A549 (cell line): ENCODE measurements at regions of chr12 and their contacts with region 1.

Region 1: DNA sequence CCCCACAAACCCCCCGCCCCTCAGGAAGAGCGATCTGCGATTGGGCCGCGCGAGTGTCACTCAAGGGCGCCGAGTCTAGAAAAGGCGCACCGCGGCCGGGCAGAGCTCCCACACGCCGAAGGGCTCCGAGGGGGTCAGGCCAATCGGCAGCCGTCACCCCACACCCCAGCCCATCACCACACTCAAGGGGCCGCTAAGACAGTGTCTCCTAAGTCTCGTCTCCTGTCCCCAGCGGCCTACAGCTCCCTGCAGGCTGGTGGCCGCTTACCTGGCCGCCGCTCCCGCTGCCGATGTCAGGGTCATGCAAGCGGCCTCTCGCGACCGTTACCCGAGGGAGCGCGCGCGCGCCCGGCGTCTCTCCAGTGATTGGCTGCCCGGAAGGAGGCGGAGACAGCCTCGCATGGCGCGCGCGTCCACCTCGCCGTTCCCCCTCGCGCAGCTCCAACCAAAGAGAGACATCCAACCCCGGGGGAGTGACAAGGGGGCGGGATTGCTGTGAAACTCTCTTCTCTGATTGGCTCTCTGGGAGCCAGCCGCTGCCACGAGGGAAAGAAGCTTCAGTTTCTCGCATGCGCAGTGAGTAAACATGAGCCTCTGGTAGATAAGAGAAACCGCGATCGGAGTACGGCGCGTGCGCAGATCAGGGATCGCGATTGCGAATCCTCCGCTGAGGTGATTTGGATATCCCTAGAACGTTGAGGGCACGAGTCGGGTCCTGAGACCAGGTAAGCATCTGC is at the starts of genes MPHOSPH9 and MTRFR:
- DNase-seq: peak; percentile 99 to 100
- ATAC-seq: peak; percentile 96 to 97
- H3K4me3 ChIP-seq: peak within 1 kb of the TSS; percentile 84
- H3K27ac ChIP-seq: peak within 1 kb of the TSS; percentile 93 to 97
- H3K4me1 ChIP-seq: peaks cover 38% of the 10 kb centered on the region
- CTCF ChIP-seq: no peak
- EP300 ChIP-seq: no peak
- POLR2A ChIP-seq: peak; percentile 99
- RAD21 ChIP-seq: 0 out of 5 replicates have a peak, but pooled peaks of 1 of the 2 experiments have one; percentile 20
- polyA plus RNA-seq, gene MPHOSPH9: 52.0 and 74.9 TPM in 2 replicates
- polyA plus RNA-seq, gene MTRFR: 15.5 and 16.0 TPM in 2 replicates

Region 2: DNA sequence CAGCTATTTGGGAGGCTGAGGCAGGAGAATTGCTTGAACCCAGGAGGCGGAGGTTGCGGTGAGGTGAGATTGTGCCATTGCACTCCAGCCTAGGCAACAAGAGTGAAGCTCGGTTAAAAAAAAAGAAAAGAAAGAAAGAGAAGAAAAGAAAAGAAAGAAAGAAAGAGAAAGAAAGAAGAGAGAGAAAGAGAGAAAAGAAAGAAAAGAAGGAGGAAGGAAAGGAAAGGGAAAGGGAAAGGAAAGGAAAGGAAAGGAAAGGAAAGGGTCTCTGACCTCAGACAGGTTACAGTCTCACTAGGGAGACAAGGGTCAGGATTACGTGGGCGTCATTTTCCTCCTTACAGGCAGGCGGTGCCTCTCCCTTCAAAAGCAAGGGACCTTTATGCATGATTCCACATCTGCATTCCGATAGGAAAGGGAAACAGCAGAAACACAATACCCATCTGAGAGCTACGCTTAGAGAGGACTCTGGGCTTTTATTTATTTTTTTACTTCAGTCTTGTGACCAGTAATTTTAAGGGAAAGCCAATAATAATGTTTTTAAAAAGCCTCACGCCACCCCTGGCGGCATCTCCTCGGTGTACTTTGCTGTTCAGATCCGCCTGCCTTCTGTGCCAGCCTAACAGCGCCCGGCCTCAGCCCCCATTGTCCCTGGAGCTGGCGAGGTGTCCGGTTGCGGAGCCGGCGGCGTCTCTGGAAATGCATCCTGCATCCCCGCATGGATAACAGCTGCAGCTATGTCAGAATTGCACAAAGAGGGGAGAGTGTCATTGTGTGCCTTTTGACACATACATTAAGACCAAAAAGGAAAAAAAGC is 398.7 kb before region 1 on chr12:
- CTCF ChIA-PET with region 1: no interaction called
- POLR2A ChIA-PET with region 1: no interaction called
- DNase-seq: peak; percentile 79 to 82
- ATAC-seq: peak; percentile 74 to 84
- H3K4me3 ChIP-seq: peak overlapping the region; percentile 98
- H3K27ac ChIP-seq: peak overlapping the region; percentile 82 to 87
- H3K4me1 ChIP-seq: peaks cover 26% of the 10 kb centered on the region
- CTCF ChIP-seq: peak; percentile 23; the same call in 1 of the 3 replicates
- EP300 ChIP-seq: no peak
- POLR2A ChIP-seq: no peak
- RAD21 ChIP-seq: no peak

Region 3: DNA sequence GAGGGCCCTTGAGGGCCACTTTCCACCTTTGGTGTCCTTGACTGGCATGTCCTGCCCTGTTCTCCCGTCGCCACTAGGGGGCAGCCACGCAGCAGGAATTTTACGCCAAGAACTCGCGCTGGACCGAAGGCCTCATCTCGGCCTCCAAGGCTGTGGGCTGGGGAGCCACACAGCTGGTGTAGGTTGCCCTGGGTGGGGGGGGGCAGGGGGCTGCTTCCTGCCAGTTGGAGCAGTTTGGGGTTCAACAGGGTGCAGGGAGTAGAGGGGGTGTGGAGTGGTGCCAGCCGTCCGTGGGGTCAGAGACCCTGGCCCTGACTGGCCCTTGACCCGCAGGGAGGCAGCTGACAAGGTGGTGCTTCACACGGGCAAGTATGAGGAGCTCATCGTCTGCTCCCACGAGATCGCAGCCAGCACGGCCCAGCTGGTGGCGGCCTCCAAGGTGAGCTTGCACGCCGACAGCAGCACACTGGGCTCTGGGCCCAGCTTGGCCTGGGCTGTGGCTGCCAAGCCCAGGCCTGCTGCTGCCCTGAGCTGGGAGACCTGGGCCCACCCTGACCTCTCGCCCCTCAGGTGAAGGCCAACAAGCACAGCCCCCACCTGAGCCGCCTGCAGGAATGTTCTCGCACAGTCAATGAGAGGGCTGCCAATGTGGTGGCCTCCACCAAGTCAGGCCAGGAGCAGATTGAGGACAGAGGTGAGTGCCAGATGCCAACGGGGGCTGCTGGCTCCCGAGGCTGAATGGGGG is 372.5 kb before region 1 on chr12:
- CTCF ChIA-PET with region 1: interaction called, 13 read pairs
- POLR2A ChIA-PET with region 1: interaction called, 4 read pairs
- DNase-seq: peak; percentile 72 to 83
- ATAC-seq: peak; percentile 63 to 87
- H3K4me3 ChIP-seq: no peak overlapping the region
- H3K27ac ChIP-seq: 0 out of 6 replicates have a peak overlapping the region, but pooled peaks of 1 of the 2 experiments have one; percentile 20
- H3K4me1 ChIP-seq: no peaks in the 10 kb centered on the region
- CTCF ChIP-seq: peak; percentile 93
- EP300 ChIP-seq: no peak
- POLR2A ChIP-seq: no peak
- RAD21 ChIP-seq: peak; percentile 96 to 98

Region 4: DNA sequence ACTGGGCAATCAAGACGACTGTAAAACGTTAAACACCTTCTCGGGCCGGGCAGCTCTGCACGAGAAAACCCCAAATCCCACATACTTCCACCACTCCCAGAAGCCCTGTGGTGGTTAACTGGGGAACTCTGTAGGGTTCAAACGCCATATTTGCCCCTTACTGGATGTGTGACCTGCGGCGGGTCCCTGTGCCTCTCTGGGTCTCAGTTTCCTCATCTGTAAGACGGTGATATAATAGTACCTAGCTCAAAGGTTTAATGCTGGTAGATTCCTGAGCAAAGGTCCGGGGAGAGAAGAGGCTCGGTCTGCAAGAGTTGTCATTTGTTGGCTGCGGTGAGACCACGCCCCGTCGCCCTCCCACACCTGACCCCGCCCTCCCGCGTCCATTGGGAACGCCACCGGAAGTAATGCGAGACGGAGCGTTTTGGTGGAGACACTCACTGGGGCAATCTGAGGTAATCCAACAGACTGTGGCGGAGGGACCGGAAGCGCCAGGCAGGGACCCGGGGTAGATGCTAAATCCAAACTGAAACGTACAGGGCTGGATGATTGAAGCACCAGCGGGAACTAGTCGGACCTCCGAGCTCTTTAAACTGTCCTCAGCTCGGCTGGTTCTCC is 258.6 kb before region 1 on chr12:
- CTCF ChIA-PET with region 1: interaction called, 13 read pairs
- POLR2A ChIA-PET with region 1: interaction called, 20 read pairs
- DNase-seq: peak; percentile 91 to 99
- ATAC-seq: peak; percentile 91 to 92
- H3K4me3 ChIP-seq: peak overlapping the region; percentile 79
- H3K27ac ChIP-seq: peak overlapping the region; percentile 98 to 99
- H3K4me1 ChIP-seq: peaks cover 10% of the 10 kb centered on the region
- CTCF ChIP-seq: no peak
- EP300 ChIP-seq: no peak
- POLR2A ChIP-seq: peak; percentile 39
- RAD21 ChIP-seq: no peak

Region 5: GRCh38 chr12:123043536-123044001 is 189.4 kb before region 1 on chr12:
- CTCF ChIA-PET with region 1: interaction called, 71 read pairs
- POLR2A ChIA-PET with region 1: interaction called, 29 read pairs
- DNase-seq: peak; percentile 77 to 83
- ATAC-seq: peak; percentile 93 to 94
- H3K4me3 ChIP-seq: no peak overlapping the region
- H3K27ac ChIP-seq: peak overlapping the region; percentile 41 to 79
- H3K4me1 ChIP-seq: peaks cover 24% of the 10 kb centered on the region
- CTCF ChIP-seq: peak; percentile 75
- EP300 ChIP-seq: no peak; a peak in 1 of 5 replicates
- POLR2A ChIP-seq: no peak
- RAD21 ChIP-seq: peak; percentile 97 to 98

Region 6: GRCh38 chr12:123126186-123127006 is 106.6 kb before region 1 on chr12:
- CTCF ChIA-PET with region 1: interaction called, 7 read pairs
- POLR2A ChIA-PET with region 1: interaction called, 14 read pairs
- DNase-seq: peak; percentile 94
- ATAC-seq: peak; percentile 96 to 98
- H3K4me3 ChIP-seq: no peak overlapping the region
- H3K27ac ChIP-seq: peak overlapping the region; percentile 91 to 96
- H3K4me1 ChIP-seq: peaks cover 58% of the 10 kb centered on the region
- CTCF ChIP-seq: no peak
- EP300 ChIP-seq: peak; percentile 10 to 56; a peak in 2 of 5 replicates
- POLR2A ChIP-seq: no peak
- RAD21 ChIP-seq: peak in 1 of 2 experiments; percentile 17; a peak in 1 of 5 replicates

Region 7: GRCh38 chr12:123250484-123251383 is 17.8 kb after region 1 on chr12:
- CTCF ChIA-PET with region 1: interaction called, 17 read pairs
- POLR2A ChIA-PET with region 1: interaction called, 22 read pairs
- DNase-seq: peak; percentile 71 to 97
- ATAC-seq: peak; percentile 86; a peak in 5 of 6 replicates
- H3K4me3 ChIP-seq: 0 out of 3 replicates have a peak overlapping the region, but pooled peaks have one; percentile 5
- H3K27ac ChIP-seq: peak overlapping the region; percentile 86 to 93
- H3K4me1 ChIP-seq: peaks cover 26% of the 10 kb centered on the region
- CTCF ChIP-seq: no peak
- EP300 ChIP-seq: no peak
- POLR2A ChIP-seq: peak; percentile 36; the same call in 1 of the 2 replicates
- RAD21 ChIP-seq: no peak

Region 8: GRCh38 chr12:123336530-123336929 is 103.6 kb after region 1 on chr12:
- CTCF ChIA-PET with region 1: no interaction called
- POLR2A ChIA-PET with region 1: no interaction called
- DNase-seq: no peak
- ATAC-seq: no peak
- H3K4me3 ChIP-seq: no peak overlapping the region
- H3K27ac ChIP-seq: no peak overlapping the region
- H3K4me1 ChIP-seq: no peaks in the 10 kb centered on the region
- CTCF ChIP-seq: no peak
- EP300 ChIP-seq: no peak
- POLR2A ChIP-seq: no peak
- RAD21 ChIP-seq: no peak